PC-3 (cell line): ENCODE measurements at regions of chr6 and their contacts with region 1.

Region 1: DNA sequence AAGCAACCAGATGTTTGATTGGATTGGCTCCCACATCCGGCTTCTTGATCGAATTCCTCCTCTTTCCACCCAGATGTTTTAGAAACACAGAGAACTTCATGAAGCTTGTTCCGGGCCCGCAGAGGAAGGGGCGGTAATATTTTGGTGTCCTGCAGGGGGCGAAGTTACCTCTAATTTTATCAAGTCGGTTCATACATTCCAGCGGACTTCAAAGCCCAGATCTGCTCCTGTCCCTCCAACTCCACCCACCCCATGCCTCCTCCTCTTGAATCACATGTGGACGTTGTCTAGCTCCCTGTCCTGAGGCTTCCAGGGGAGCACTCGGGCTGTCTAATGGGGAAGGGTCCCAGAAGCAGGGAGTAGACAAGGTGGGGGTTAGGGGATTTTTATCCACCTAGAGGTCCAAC is 2.9 kb upstream of the BMP6 start:
- DNase-seq: peak; percentile 88
- ATAC-seq: peak; percentile 19
- H3K4me3 ChIP-seq: no peak overlapping the region
- H3K27ac ChIP-seq: no peak overlapping the region
- H3K4me1 ChIP-seq: peaks cover 15% of the 10 kb centered on the region
- H3K27me3 ChIP-seq: peaks cover 33% of the 10 kb centered on the region
- CTCF ChIP-seq: peak; percentile 76

Region 2: GRCh38 chr6:7401075-7401474 is 322.0 kb before region 1 on chr6:
- CTCF ChIA-PET with region 1: no interaction called
- POLR2A ChIA-PET with region 1: no interaction called
- intact Hi-C with region 1: no loop called
- DNase-seq: peak; percentile 86
- ATAC-seq: peak; percentile 100
- H3K4me3 ChIP-seq: no peak overlapping the region; the same call in 1 of the 2 replicates
- H3K27ac ChIP-seq: peak overlapping the region; percentile 43
- H3K4me1 ChIP-seq: peaks cover 16% of the 10 kb centered on the region
- H3K27me3 ChIP-seq: no peaks in the 10 kb centered on the region
- CTCF ChIP-seq: no peak

Region 3: GRCh38 chr6:7673063-7673536 is 49.9 kb before region 1 on chr6:
- CTCF ChIA-PET with region 1: interaction called, 3 read pairs
- POLR2A ChIA-PET with region 1: no interaction called
- intact Hi-C with region 1: loop called (anchors 2 kb)
- DNase-seq: peak; percentile 87
- ATAC-seq: peak; percentile 79
- H3K4me3 ChIP-seq: no peak overlapping the region
- H3K27ac ChIP-seq: peak overlapping the region; percentile 62
- H3K4me1 ChIP-seq: peaks cover 34% of the 10 kb centered on the region
- H3K27me3 ChIP-seq: no peaks in the 10 kb centered on the region
- CTCF ChIP-seq: peak; percentile 55

Region 4: DNA sequence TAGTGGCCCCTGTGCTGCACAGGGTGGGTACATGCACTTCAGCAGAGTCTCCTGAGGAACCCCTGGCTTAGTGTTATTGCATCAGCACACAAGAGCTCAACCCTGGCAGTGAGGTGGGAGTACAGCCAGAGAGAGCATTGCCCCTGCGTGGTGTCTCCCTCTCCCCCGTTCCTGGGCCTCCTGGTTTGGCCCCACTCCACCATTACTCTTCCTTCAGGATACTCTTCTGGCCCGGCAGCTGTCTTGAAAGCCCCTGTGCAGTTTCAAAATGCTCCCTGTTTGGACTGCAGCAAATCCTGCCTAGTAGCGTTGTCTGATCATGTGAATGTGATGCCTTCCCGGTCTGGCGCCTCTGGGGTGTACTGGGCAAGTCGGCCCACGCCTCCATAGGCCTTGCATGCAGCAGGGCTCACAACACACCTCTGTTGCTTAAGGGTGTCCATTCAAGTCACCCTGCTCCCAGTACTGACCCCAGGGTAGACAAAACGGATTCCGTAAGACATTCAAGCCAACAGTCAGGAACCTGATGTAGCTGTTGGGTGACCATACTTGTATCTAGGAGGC is 155.4 kb after region 1 on chr6:
- CTCF ChIA-PET with region 1: no interaction called
- POLR2A ChIA-PET with region 1: no interaction called
- intact Hi-C with region 1: loop called (anchors 5 kb)
- DNase-seq: no peak
- ATAC-seq: peak; percentile 17; the same call in 1 of the 2 replicates
- H3K4me3 ChIP-seq: no peak overlapping the region
- H3K27ac ChIP-seq: no peak overlapping the region
- H3K4me1 ChIP-seq: no peaks in the 10 kb centered on the region
- H3K27me3 ChIP-seq: no peaks in the 10 kb centered on the region
- CTCF ChIP-seq: no peak

Region 5: DNA sequence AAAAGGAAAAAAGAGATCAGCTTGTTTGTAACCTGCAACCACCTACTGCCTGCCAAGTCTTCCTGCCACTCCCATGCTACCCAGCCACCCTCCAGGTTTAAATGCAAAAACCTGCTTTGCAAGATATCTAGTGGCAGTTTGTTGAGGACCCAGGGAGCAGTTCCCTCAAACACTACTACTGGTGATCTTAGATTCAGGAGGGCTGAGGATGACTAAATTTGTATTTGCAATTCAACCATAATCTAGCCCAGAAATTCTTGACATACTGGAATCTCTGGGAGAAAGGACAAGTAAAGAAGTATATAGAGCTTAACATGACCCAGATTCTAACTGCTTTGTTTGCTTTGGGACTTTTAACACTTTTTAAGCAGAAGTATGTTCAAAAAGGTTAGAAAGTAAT is 246.3 kb after region 1 on chr6:
- CTCF ChIA-PET with region 1: interaction called, 11 read pairs
- POLR2A ChIA-PET with region 1: no interaction called
- intact Hi-C with region 1: no loop called
- DNase-seq: peak; percentile 56
- ATAC-seq: no peak
- H3K4me3 ChIP-seq: no peak overlapping the region
- H3K27ac ChIP-seq: no peak overlapping the region
- H3K4me1 ChIP-seq: peaks cover 21% of the 10 kb centered on the region
- H3K27me3 ChIP-seq: no peaks in the 10 kb centered on the region
- CTCF ChIP-seq: no peak

Region 6: GRCh38 chr6:7992002-7992815 is 269.2 kb after region 1 on chr6:
- CTCF ChIA-PET with region 1: no interaction called
- POLR2A ChIA-PET with region 1: no interaction called
- intact Hi-C with region 1: loop called (anchors 5 kb)
- DNase-seq: peak; percentile 60
- ATAC-seq: peak; percentile 82
- H3K4me3 ChIP-seq: no peak overlapping the region
- H3K27ac ChIP-seq: no peak overlapping the region
- H3K4me1 ChIP-seq: no peaks in the 10 kb centered on the region
- H3K27me3 ChIP-seq: no peaks in the 10 kb centered on the region
- CTCF ChIP-seq: peak; percentile 88

Region 7: GRCh38 chr6:8006208-8006607 is 283.2 kb after region 1 on chr6:
- CTCF ChIA-PET with region 1: no interaction called
- POLR2A ChIA-PET with region 1: interaction called, 3 read pairs
- intact Hi-C with region 1: loop called (anchors 1 kb)
- DNase-seq: peak; percentile 55
- ATAC-seq: peak; percentile 54
- H3K4me3 ChIP-seq: no peak overlapping the region
- H3K27ac ChIP-seq: no peak overlapping the region
- H3K4me1 ChIP-seq: no peaks in the 10 kb centered on the region
- H3K27me3 ChIP-seq: no peaks in the 10 kb centered on the region
- CTCF ChIP-seq: peak; percentile 72

Region 8: GRCh38 chr6:8063761-8064637 is 341.0 kb after region 1 on chr6 and contains the start of gene BLOC1S5:
- CTCF ChIA-PET with region 1: interaction called, 6 read pairs
- POLR2A ChIA-PET with region 1: no interaction called
- intact Hi-C with region 1: loop called (anchors 1 kb)
- DNase-seq: peak; percentile 96
- ATAC-seq: peak; percentile 90
- H3K4me3 ChIP-seq: peak within 1 kb of the TSS; percentile 93
- H3K27ac ChIP-seq: peak within 1 kb of the TSS; percentile 19
- H3K4me1 ChIP-seq: 0 out of 2 replicates have a peak, but pooled peaks cover 7% of the 10 kb centered on the region
- H3K27me3 ChIP-seq: no peaks in the 10 kb centered on the region
- CTCF ChIP-seq: no peak
- total RNA-seq, gene BLOC1S5: 5.8 and 9.1 TPM in 2 replicates